HEK293T (cell line): ENCODE measurements at regions of chr4 and their contacts with region 1.

Region 1: GRCh38 chr4:2262143-2262943 is 434 bp upstream of the MXD4 start:
- DNase-seq: peak; percentile 98

Region 2: DNA sequence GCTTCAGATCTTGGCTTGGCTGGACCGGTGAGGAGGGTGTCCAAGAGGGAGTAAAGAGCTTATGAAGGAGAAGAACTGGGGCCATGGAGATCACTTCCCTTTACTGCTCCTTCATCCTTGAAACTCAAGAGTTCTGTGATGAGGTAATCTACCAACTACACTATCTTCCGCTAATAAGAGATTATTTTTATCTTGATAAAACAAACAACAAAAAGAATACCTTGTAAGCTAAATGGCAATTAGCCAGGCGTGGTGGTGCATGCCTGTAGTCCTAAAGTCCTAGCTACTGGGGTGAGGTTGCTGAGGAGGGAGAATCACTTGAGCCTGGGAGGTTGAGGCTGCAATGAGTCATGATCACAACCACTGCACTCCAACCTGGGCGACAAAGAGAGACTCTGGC is 67.8 kb before region 1 on chr4:
- CTCF ChIA-PET with region 1: no interaction called
- POLR2A ChIA-PET with region 1: no interaction called
- DNase-seq: no peak

Region 3: GRCh38 chr4:2243681-2244380 is 18.5 kb before region 1 on chr4:
- CTCF ChIA-PET with region 1: interaction called, 3 read pairs
- POLR2A ChIA-PET with region 1: interaction called, 11 read pairs
- DNase-seq: peak; percentile 20